Gastrocnemius medialis (tissue), 4 donors: ENCODE measurements at regions of chr3 and their contacts with region 1.

Region 1: GRCh38 chr3:196739671-196740480 is at the start of gene PAK2:
- DNase-seq: peak; percentile 87 to 90
- ATAC-seq: peak; percentile 82 to 83
- H3K4me3 ChIP-seq: peak within 1 kb of the TSS; percentile 65 to 86 (median 75)
- H3K27ac ChIP-seq: peak within 1 kb of the TSS; percentile 87 to 98 (median 94)
- H3K4me1 ChIP-seq: peaks cover 14 to 20% of the 10 kb centered on the region in 2 donors
- H3K27me3 ChIP-seq: no peaks in the 10 kb centered on the region
- CTCF ChIP-seq: peak in 2 of 5 experiments; percentile 12 to 27
- POLR2A ChIP-seq: peak; percentile 74 to 76
- total RNA-seq, gene PAK2: 42.6 to 58.6 (median 50.1) TPM

Region 2: GRCh38 chr3:196287440-196288148 is 452.3 kb before region 1 on chr3 and contains the start of gene PCYT1A:
- in situ Hi-C with region 1: no loop called
- intact Hi-C with region 1: loop called (anchors 1 kb)
- DNase-seq: peak; percentile 90 to 95
- ATAC-seq: peak; percentile 98
- H3K4me3 ChIP-seq: peak within 1 kb of the TSS; percentile 75 to 97 (median 93)
- H3K27ac ChIP-seq: peak within 1 kb of the TSS; percentile 98 to 100 (median 99)
- H3K4me1 ChIP-seq: peaks cover 40 to 43% of the 10 kb centered on the region in 2 donors
- H3K27me3 ChIP-seq: no peaks in the 10 kb centered on the region
- CTCF ChIP-seq: no peak
- POLR2A ChIP-seq: peak; percentile 93 to 97
- total RNA-seq, gene PCYT1A: 90.5 to 123 (median 99.0) TPM

Region 3: DNA sequence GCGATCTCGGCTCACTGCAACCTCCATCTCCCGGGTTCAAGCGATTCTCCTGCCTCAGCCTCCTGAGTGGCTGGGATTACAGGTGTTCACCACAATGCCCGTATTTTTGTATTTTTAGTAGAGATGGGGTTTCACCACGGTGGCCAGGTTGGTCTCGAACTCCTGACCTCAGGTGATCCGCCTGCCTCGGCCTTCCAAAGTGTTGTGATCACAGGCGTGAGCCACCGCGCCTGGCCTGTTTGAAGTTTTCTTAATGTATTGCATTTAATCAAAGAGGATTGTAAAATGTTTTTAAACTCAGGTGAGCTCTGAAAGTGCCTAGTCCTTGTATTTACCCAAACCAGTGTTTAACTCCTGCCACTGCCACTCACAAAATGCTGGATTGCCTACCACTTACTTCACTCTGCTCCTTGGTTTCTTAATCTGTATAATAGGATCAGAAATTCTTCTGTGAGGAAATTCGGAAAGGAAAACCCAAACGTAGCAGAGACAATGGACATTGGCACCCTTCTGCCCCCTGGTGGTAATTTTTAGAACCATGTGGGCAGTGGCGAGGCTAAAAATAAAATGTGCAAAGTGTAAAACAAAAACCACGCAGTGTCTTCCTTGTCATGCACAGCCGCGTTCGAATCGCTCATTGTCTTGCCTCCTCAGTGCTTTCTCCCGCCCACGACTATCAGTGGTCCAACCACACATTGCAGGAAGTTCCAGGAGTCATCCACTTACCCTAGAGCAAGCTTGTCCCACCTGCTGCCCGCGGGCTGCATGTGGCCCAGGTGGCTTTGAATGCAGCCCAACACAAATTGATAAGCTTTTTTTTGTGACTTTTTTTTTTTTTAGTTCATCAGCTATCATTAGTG is 55.1 kb before region 1 on chr3:
- in situ Hi-C with region 1: no loop called
- intact Hi-C with region 1: no loop called
- DNase-seq: peak; percentile 16 to 36
- ATAC-seq: peak; percentile 55 to 85
- H3K4me3 ChIP-seq: peak overlapping the region in 2 of 4 donors; percentile 22 to 27
- H3K27ac ChIP-seq: no peak overlapping the region
- H3K4me1 ChIP-seq: peaks cover 0 to 6% of the 10 kb centered on the region in 2 donors
- H3K27me3 ChIP-seq: no peaks in the 10 kb centered on the region
- CTCF ChIP-seq: peak; percentile 81 to 91 (median 85)
- POLR2A ChIP-seq: no peak

Region 4: DNA sequence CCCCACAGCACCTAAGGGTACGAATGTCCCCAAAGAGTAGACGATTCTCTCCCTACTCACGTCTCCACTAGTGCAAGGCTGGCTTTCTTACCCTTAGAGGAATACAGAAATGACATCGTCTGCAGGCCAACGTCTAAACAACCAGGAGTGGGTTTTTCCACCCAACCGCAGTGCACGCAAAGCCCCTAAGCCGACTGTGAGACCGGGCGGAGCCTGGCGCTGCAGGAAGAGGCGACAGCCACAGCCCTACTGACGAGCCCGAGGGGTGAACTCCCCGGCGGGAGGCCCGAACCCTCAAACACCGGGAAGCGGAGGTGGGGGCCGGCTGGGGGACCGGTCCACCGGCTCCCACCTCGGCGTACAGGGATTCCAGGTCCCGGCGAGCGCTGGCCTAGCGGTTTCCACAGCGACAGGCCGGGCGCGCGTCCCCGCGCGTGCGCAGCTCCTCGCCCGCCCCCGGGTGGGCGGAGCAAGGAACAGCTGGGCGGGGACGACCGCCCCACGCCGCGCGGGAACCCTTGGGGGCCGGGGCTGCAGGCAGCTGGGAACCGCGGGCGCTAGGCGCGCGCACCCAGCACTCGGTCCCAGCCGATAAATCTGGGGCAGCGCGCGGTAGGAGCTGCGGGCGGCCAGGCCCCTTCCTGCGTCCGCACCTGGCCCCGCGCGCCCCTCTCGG is 27.9 kb before region 1 on chr3 and contains the starts of genes CEP19 and PIGX:
- in situ Hi-C with region 1: no loop called
- intact Hi-C with region 1: loop called (anchors 1 kb)
- DNase-seq: peak; percentile 66 to 68
- ATAC-seq: peak; percentile 94
- H3K4me3 ChIP-seq: peak within 1 kb of the TSS; percentile 72 to 100 (median 82)
- H3K27ac ChIP-seq: peak within 1 kb of the TSS; percentile 84 to 93 (median 90)
- H3K4me1 ChIP-seq: peaks cover 14 to 20% of the 10 kb centered on the region in 2 donors
- H3K27me3 ChIP-seq: no peaks in the 10 kb centered on the region
- CTCF ChIP-seq: peak; percentile 13 to 52 (median 41)
- POLR2A ChIP-seq: peak; percentile 81 to 88
- total RNA-seq, gene CEP19: 0.62 to 4.1 (median 1.4) TPM
- total RNA-seq, gene PIGX: 13.2 to 35.1 (median 28.8) TPM

Region 5: GRCh38 chr3:196793235-196793641 is 53.4 kb after region 1 on chr3:
- in situ Hi-C with region 1: loop called in 1 of 4 experiments (anchors 10 kb)
- intact Hi-C with region 1: no loop called
- DNase-seq: no peak
- ATAC-seq: peak; percentile 86 to 92
- H3K4me3 ChIP-seq: no peak overlapping the region
- H3K27ac ChIP-seq: peak overlapping the region; percentile 62 to 75 (median 69)
- H3K4me1 ChIP-seq: peaks cover 32 to 43% of the 10 kb centered on the region in 2 donors
- H3K27me3 ChIP-seq: no peaks in the 10 kb centered on the region
- CTCF ChIP-seq: no peak
- POLR2A ChIP-seq: no peak

Region 6: DNA sequence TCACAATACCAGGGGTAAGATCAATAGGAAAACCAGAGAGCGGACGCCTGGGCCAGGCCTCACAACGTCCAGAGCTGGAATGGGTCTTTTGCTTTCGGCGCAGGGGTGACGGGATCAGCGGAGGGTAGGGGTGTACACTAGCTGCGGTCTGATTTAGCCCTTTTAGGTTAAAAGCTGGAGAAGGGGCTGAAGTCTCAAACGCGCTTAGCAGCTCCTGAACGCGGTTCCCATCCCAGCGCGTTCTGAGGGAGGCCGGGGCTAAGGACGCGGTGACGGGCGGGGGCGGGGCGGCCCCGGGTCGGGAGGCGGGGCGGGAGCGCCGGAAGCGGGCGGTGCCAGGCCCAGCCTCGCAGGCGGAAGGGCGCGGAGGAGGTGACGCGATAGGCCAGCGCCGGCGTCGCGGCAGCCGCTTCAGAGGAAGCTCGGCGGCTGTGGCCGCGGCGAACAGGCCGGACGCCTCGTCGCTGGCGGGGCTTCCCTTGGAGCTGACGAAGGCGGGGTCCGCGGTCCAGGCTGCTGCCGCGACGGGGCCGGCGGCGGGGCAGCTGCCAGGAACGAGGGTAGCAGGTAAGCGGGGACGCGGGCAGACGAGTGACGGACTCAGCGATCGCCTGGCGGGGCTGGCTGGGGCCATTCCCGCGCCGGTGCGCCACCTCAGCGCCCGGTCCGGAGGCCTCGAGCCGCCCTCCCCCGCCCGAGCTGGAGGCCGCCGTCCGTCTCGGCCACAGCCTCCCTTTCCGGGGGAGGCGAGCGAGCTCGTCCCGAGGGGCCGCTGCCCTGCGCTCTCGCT is 127.8 kb after region 1 on chr3 and contains the start of gene SENP5:
- in situ Hi-C with region 1: no loop called
- intact Hi-C with region 1: loop called (anchors 5 kb)
- DNase-seq: peak; percentile 79 to 87
- ATAC-seq: peak; percentile 94 to 95
- H3K4me3 ChIP-seq: peak within 1 kb of the TSS; percentile 87 to 92 (median 90)
- H3K27ac ChIP-seq: peak within 1 kb of the TSS; percentile 81 to 96 (median 92)
- H3K4me1 ChIP-seq: peaks cover 32 to 44% of the 10 kb centered on the region in 2 donors
- H3K27me3 ChIP-seq: no peaks in the 10 kb centered on the region
- CTCF ChIP-seq: no peak
- POLR2A ChIP-seq: peak; percentile 89 to 96
- total RNA-seq, gene SENP5: 21.4 to 42.7 (median 31.7) TPM

Region 7: DNA sequence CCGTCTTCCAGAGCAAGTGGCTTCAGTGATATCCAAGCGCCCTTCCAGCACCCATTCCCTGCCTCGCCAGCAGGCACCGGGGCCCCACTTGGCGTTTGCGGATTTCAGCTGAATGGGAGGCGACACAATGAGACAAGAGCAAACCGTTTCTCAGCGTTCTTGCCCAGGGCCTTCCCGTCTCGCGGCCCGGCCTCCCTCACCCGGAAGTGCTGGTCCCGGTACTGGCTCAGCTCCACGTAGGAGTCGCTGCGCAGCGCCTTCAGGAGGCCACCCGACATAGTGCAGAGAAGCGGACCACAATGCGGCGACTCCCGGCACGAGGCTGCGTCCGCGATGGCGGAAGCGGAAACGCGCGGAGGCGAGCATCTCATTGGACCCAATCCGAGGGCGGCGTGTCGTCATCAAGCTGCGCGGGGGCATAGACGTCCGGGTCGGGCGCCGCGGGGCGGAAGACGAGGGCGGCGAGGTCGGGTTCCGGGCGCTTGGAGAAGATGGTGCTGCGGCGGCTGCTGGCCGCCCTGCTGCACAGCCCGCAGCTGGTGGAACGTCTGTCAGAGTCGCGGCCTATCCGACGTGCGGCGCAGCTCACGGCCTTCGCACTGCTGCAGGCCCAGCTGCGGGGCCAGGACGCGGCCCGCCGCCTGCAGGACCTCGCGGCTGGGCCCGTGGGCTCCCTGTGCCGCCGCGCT is 202.5 kb after region 1 on chr3 and contains the start of gene NCBP2:
- in situ Hi-C with region 1: loop called in 1 of 4 experiments (anchors 10 kb)
- intact Hi-C with region 1: loop called (anchors 1 kb)
- DNase-seq: peak; percentile 96 to 98
- ATAC-seq: peak; percentile 94 to 97
- H3K4me3 ChIP-seq: peak within 1 kb of the TSS; percentile 93 to 99 (median 98)
- H3K27ac ChIP-seq: peak within 1 kb of the TSS; percentile 88 to 93 (median 92)
- H3K4me1 ChIP-seq: peaks cover 27 to 36% of the 10 kb centered on the region in 2 donors
- H3K27me3 ChIP-seq: no peaks in the 10 kb centered on the region
- CTCF ChIP-seq: peak; percentile 56 to 77 (median 64)
- POLR2A ChIP-seq: peak; percentile 83 to 90
- total RNA-seq, gene NCBP2: 23.4 to 29.9 (median 27.5) TPM